PC-9 (cell line): ENCODE measurements at regions of chr2 and their contacts with region 1.

Region 1: GRCh38 chr2:217510771-217511291 is 492.0 kb downstream of the TNS1 start:
- DNase-seq: peak; percentile 67 to 74
- H3K4me3 ChIP-seq: no peak overlapping the region
- H3K27ac ChIP-seq: no peak overlapping the region
- H3K4me1 ChIP-seq: peaks cover 16% of the 10 kb centered on the region
- H3K27me3 ChIP-seq: no peaks in the 10 kb centered on the region
- CTCF ChIP-seq: peak; percentile 86

Region 2: GRCh38 chr2:216681683-216682082 is 829.1 kb before region 1 on chr2:
- CTCF ChIA-PET with region 1: interaction called, 7 read pairs
- POLR2A ChIA-PET with region 1: no interaction called
- intact Hi-C with region 1: loop called (anchors 1 kb)
- DNase-seq: no peak
- H3K4me3 ChIP-seq: no peak overlapping the region
- H3K27ac ChIP-seq: 0 out of 2 replicates have a peak overlapping the region, but pooled peaks have one; percentile 10
- H3K4me1 ChIP-seq: peaks cover 17% of the 10 kb centered on the region
- H3K27me3 ChIP-seq: no peaks in the 10 kb centered on the region
- CTCF ChIP-seq: no peak

Region 3: DNA sequence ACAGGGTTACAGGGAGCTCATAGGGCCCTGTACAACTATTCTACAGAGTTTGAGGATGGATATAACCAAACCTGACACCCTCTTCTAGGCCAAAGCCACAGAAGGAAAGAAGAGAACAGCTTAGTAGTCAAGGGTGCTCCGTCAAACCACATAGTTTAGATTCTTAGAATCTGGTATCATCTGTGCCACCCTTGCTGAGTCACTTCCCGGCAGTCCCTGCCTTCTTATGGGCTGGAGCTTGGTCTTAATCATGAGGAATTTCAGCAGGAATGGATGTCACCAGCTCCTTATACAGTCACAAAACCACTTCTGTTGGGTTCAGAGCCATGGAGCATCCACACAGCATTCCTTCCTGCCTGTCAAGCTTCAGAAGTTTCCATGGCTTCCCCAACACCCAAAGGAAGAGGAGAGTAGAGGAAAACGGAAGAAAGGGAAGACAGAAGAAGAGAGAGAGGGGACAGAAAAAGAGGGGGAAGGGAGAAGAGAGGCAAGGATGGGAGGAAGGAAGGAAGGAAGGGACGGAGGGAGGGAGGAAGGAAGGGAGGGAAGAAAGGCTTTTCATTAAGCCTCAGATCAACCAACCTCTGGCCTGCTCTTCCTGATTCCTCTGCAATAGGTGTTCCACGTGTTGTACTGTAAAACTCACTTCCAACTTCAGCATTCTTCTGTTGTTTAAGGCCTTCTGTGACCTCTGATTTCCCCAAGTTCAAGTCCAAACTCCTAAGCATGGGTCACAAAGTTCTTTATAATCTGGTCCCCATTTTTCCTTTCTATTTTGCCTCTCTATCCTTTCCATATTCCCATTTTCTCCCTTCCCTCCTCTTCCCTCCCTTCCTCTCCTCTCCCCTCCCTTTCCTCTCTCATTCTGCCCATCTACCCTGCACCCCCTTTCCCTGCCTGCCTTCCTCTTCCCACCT is 404.8 kb before region 1 on chr2:
- CTCF ChIA-PET with region 1: no interaction called
- POLR2A ChIA-PET with region 1: no interaction called
- intact Hi-C with region 1: loop called (anchors 5 kb)
- DNase-seq: peak; percentile 79 to 95
- H3K4me3 ChIP-seq: no peak overlapping the region
- H3K27ac ChIP-seq: peak overlapping the region; percentile 94
- H3K4me1 ChIP-seq: peaks cover 61% of the 10 kb centered on the region
- H3K27me3 ChIP-seq: no peaks in the 10 kb centered on the region
- CTCF ChIP-seq: no peak

Region 4: GRCh38 chr2:217277646-217278398 is 233.0 kb before region 1 on chr2:
- CTCF ChIA-PET with region 1: no interaction called
- POLR2A ChIA-PET with region 1: no interaction called
- intact Hi-C with region 1: loop called (anchors 1 kb)
- DNase-seq: peak; percentile 66 to 74
- H3K4me3 ChIP-seq: no peak overlapping the region
- H3K27ac ChIP-seq: peak overlapping the region; percentile 25; the same call in 1 of the 2 replicates
- H3K4me1 ChIP-seq: peaks cover 25% of the 10 kb centered on the region; the same call in 1 of the 2 replicates
- H3K27me3 ChIP-seq: no peaks in the 10 kb centered on the region
- CTCF ChIP-seq: no peak

Region 5: DNA sequence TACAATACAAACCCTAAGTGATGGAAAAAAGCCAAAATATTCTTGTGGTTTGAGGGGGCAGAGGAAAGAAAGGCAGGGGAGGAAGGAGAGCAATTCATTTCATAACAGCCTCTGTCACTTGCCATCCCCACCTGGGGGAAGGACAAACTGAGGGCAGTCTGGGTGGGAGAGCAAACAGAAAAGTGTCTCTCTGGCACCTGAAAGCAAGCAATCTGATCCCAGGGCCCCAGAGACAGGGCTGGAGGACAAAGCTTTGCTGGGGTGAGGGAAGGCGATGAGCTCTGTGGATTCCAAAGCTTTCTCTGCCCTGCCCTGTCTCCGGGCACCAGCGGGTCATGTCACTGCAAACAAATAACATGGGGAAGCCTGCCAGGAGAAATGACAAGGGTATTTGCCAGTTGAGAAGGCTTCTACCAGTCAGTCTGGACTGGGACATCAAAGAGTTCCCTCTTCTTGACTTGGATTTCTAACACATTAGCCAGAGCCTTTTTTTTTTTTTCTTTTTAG is 122.9 kb before region 1 on chr2:
- CTCF ChIA-PET with region 1: no interaction called
- POLR2A ChIA-PET with region 1: no interaction called
- intact Hi-C with region 1: loop called (anchors 1 kb)
- DNase-seq: peak; percentile 90 to 92
- H3K4me3 ChIP-seq: no peak overlapping the region
- H3K27ac ChIP-seq: peak overlapping the region; percentile 43
- H3K4me1 ChIP-seq: peaks cover 30% of the 10 kb centered on the region
- H3K27me3 ChIP-seq: no peaks in the 10 kb centered on the region
- CTCF ChIP-seq: no peak

Region 6: GRCh38 chr2:217756375-217757107 is 245.7 kb after region 1 on chr2:
- CTCF ChIA-PET with region 1: no interaction called
- POLR2A ChIA-PET with region 1: no interaction called
- intact Hi-C with region 1: loop called (anchors 2 kb)
- DNase-seq: peak in 1 of 2 experiments; percentile 49
- H3K4me3 ChIP-seq: no peak overlapping the region
- H3K27ac ChIP-seq: no peak overlapping the region
- H3K4me1 ChIP-seq: no peaks in the 10 kb centered on the region
- H3K27me3 ChIP-seq: 0 out of 2 replicates have a peak, but pooled peaks cover 4% of the 10 kb centered on the region
- CTCF ChIP-seq: peak; percentile 79